IMR-90 (cell line): ENCODE measurements at regions of chr7 and their contacts with region 1.

Region 1: DNA sequence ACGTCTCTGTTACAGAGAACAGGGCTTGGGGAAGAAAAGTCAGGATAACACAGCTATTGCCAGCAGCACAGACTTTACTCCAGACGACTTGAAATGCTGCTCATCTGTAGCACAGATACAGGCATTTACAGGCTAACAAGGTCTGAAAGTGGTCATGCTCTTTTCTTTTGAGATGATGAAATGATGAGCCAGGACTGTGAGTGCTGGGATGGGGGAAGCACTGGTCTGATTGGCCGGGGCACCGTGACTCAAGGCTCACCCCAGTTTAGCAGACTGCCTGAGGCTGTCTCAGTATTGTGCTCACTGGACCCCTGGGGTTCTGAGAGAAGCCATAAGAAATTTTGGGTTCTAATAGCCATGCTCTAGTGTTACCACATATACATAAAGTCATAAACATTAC is 12.4 kb downstream of the SMKR1 start:
- DNase-seq: peak; percentile 24
- ATAC-seq: peak; percentile 61
- H3K4me3 ChIP-seq: no peak overlapping the region
- H3K27ac ChIP-seq: no peak overlapping the region
- H3K4me1 ChIP-seq: no peaks in the 10 kb centered on the region
- H3K27me3 ChIP-seq: peaks cover 32% of the 10 kb centered on the region
- CTCF ChIP-seq: no peak
- POLR2A ChIP-seq: no peak
- RAD21 ChIP-seq: no peak

Region 2: GRCh38 chr7:129553861-129554530 is 39.3 kb after region 1 on chr7:
- CTCF ChIA-PET with region 1: no interaction called
- POLR2A ChIA-PET with region 1: no interaction called
- dilution Hi-C with region 1: no loop called
- in situ Hi-C with region 1: no loop called
- intact Hi-C with region 1: loop called (anchors 5 kb)
- DNase-seq: peak; percentile 64
- ATAC-seq: peak; percentile 82
- H3K4me3 ChIP-seq: peak overlapping the region; percentile 39
- H3K27ac ChIP-seq: no peak overlapping the region
- H3K4me1 ChIP-seq: peaks cover 4% of the 10 kb centered on the region
- H3K27me3 ChIP-seq: peaks cover 21% of the 10 kb centered on the region
- CTCF ChIP-seq: no peak
- POLR2A ChIP-seq: no peak
- RAD21 ChIP-seq: no peak